Ascending aorta (tissue), 2 donors: ENCODE measurements at regions of chr2 and their contacts with region 1.

Region 1: DNA sequence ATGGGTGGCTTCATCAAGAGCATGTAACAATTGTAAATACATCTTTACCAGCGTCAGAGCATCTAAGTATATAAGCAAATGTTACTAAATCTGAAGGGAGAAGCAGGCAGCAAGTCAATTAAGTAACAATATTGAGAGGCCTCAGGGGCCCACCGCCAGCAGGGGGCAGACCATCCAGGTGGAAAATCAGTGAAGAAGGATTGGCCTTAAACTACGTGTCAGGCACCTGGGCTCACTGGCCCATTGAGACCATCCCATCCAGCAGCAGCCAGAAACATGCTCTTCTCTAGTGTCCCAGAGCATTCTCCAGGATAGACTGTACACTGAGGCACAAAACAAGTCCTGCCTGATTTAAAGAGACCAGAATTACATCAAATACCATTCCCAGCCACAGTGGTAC is 96.2 kb upstream of the SNTG2 start:
- DNase-seq: no peak
- H3K4me3 ChIP-seq: no peak overlapping the region
- H3K27ac ChIP-seq: no peak overlapping the region
- H3K4me1 ChIP-seq: no peaks in the 10 kb centered on the region
- H3K27me3 ChIP-seq: no peaks in the 10 kb centered on the region
- CTCF ChIP-seq: peak in 2 of 3 experiments; percentile 19 to 36

Region 2: DNA sequence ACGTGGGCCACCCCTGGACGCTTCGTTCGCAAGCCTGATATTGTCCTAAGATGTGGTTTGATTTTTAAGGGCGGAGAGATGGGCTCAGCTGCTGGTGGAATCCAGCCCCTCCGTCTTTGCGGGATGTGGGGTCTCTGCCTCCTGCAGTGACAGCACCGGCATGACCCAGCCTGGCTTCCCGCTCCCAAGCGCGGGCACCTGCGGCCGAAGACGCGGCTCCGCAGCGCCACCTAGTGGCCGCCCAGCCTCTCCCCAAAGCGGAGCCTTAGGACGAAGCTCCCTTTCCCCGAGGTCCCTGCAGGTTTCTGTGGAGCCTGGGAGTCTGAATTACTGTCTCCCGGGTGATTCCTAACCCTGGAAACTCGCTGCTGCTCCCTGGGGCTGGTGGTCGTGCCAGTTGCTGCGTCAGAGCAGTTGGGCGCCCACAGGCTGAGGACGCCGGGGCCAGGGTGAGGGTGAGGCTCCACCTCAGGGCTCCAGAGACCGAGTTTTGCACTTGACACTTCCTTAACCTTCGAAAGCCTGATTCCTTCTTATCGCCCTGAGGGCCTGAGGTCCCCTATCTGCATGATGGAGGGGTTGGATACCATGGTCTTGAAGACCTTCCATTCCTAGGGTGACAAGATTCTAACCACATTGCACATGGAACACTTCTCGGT is 696.3 kb after region 1 on chr2:
- intact Hi-C with region 1: loop called (anchors 10 kb)
- DNase-seq: peak in 1 of 2 donors; percentile 69
- H3K4me3 ChIP-seq: no peak overlapping the region
- H3K27ac ChIP-seq: no peak overlapping the region
- H3K4me1 ChIP-seq: peaks cover 0 to 4% of the 10 kb centered on the region in 2 donors
- H3K27me3 ChIP-seq: no peaks in the 10 kb centered on the region
- CTCF ChIP-seq: peak; percentile 65 to 98 (median 92)